ENCODE measurements at regions of chr11 and their contacts with region 1.

Region 1: DNA sequence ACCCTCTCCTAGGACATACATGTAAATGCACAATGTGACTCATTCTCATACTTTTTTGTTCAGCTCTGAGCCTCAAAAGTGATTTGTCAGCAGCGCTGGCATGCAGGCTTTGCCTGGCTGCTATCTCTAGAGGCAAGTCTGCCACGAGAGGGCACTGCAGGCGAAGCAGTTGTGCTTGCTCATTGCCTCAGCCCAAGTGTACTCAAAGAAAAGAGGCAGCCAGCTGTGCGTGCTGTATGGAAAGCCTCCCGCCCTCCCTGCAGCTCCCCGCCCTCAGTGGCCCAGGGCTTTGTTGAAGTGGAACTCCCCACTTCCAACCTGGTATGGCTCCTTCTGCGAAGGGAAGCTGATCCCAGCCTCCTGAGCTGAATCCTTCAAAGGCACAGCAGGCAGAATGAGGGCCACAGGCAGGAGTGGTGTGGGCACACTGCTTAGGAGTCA is 16.3 kb downstream of the SDHAF2 start:
- DNase-seq: peak; percentile 79 to 93
- ATAC-seq: peak; percentile 82 to 87
- H3K4me3 ChIP-seq: no peak overlapping the region
- H3K27ac ChIP-seq: peak overlapping the region; percentile 78 to 90 (median 83)
- H3K4me1 ChIP-seq: peaks cover 54 to 57% of the 10 kb centered on the region in 2 donors
- H3K27me3 ChIP-seq: no peaks in the 10 kb centered on the region
- CTCF ChIP-seq: peak; percentile 86 to 91 (median 88)
- POLR2A ChIP-seq: no peak

Region 2: DNA sequence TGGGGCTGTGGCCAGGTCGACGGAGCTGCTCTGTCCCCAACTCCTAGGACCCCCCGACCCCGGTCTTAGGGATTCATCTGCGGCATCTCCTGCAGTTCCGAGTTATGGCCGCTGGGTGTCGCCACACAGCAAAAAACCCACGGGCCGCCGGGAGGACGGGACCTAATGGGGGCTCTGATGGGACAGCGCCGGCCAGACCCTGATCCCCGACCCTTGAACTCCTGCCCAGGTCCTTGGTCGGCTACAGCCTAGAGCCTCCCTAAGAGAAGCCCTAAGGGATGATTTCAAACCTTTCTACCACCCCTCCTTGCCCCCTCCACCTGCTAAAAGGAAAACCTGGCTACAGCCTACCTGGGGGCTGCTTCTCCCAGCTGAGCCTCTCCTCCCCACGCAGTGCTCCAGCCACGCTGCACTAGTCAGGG is 31.5 kb after region 1 on chr11:
- in situ Hi-C with region 1: no loop called
- intact Hi-C with region 1: loop called (anchors 1 kb)
- DNase-seq: peak in 1 of 2 donors; percentile 37
- ATAC-seq: no peak
- H3K4me3 ChIP-seq: no peak overlapping the region
- H3K27ac ChIP-seq: no peak overlapping the region
- H3K4me1 ChIP-seq: peaks cover 1 to 15% of the 10 kb centered on the region in 2 donors
- H3K27me3 ChIP-seq: peaks cover 0 to 6% (median 4%) of the 10 kb centered on the region in 3 donors
- CTCF ChIP-seq: peak; percentile 89 to 96 (median 91)
- POLR2A ChIP-seq: no peak

Region 3: GRCh38 chr11:61509043-61510029 is 63.1 kb after region 1 on chr11:
- in situ Hi-C with region 1: loop called in 1 of 4 experiments (anchors 10 kb)
- intact Hi-C with region 1: no loop called
- DNase-seq: peak; percentile 33 to 51
- ATAC-seq: peak; percentile 85 to 87
- H3K4me3 ChIP-seq: peak overlapping the region; percentile 15 to 46 (median 38)
- H3K27ac ChIP-seq: peak overlapping the region in 2 of 4 donors; percentile 20 to 33
- H3K4me1 ChIP-seq: peaks cover 6 to 7% of the 10 kb centered on the region in 2 donors
- H3K27me3 ChIP-seq: peaks cover 52 to 57% (median 56%) of the 10 kb centered on the region in 3 donors
- CTCF ChIP-seq: peak; percentile 32 to 66 (median 52)
- POLR2A ChIP-seq: no peak

Region 4: DNA sequence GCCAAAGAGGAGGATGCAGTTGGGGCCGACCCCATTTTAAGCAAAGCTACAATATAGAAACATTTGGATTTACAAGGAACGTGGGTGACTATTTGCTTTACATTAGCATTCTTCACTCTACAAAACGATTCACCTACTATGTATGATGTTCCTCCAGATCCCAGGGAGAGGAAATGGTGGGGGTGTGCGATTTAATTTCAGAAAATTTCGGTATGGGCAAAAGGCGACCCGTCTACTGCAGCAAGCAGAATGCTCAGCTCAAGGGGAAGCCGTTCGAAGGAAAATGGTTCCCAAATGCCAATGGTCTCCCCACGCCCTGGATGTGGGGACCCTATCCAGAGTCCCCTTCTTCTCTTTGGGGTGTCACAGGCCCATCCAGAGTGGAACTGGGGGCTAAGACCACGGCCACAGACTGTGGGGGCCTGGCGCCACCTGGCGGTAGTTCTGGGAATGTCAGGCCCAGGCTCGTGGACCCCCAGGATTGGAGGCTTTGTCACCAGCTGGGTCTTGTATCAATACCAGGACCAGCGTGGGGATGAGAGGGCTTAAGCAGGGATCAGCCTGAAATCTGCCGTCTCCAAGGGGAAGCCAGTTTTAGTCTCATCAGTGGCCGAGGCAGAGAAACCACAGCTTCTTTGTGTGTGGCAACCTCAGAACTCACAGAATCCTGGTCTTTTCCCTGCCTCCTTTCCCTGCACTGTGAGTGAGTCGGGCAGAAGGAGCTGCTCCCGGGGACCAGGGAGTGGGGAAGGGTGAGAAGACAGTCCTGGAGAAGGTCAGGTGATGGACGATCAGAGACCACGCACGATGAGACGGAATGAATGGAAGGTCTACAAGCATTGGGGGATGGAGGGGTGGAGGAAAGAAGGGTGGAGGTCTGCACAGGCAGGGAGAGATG is 70.7 kb after region 1 on chr11:
- in situ Hi-C with region 1: loop called (anchors 5 to 10 kb)
- intact Hi-C with region 1: loop called (anchors 1 kb)
- DNase-seq: no peak
- ATAC-seq: peak; percentile 35
- H3K4me3 ChIP-seq: peak overlapping the region in 2 of 4 donors; percentile 22 to 32
- H3K27ac ChIP-seq: no peak overlapping the region
- H3K4me1 ChIP-seq: no peaks in the 10 kb centered on the region
- H3K27me3 ChIP-seq: no peaks in the 10 kb centered on the region
- CTCF ChIP-seq: peak; percentile 97 to 99 (median 98)
- POLR2A ChIP-seq: no peak

Measured in gastrocnemius medialis (tissue), 4 donors.